ENCODE measurements at regions of chr1 and their contacts with region 1.

Region 1: DNA sequence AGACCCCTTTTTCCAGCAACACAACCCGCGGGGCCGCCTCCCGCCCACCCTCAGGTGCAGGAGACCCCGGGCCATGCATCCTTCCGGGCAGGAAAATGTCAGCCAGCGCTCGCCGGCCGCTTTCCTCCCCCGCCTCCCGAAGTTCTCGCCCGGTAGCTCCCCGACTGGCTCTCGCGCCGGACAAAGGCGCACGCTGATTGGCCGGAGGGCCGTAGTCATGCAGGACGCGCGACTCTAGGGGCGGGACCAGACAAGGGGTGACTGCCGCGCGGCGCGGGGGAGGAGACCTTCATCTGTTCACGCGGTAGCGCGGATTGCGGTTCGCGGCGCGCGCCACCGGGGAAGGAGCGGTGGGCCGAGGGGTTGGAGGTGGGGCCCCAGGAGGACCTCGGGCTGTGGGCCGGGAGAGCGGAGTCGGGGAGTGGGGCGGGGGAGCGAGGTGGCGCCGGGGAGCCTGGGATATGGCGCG is at the start of gene FLVCR1:
- DNase-seq: peak; percentile 79 to 94
- H3K4me3 ChIP-seq: peak within 1 kb of the TSS; percentile 74 to 96 (median 86)
- H3K27ac ChIP-seq: peak within 1 kb of the TSS; percentile 62
- H3K4me1 ChIP-seq: peaks cover 2 to 10% (median 6%) of the 10 kb centered on the region in 4 experiments
- H3K27me3 ChIP-seq: no peaks in the 10 kb centered on the region
- CTCF ChIP-seq: no peak
- EP300 ChIP-seq: no peak
- POLR2A ChIP-seq: peak; percentile 46 to 60; a peak in 2 of 3 replicates
- RAD21 ChIP-seq: no peak
- total RNA-seq, gene FLVCR1: 66.2 and 75.7 TPM in 2 replicates

Region 2: GRCh38 chr1:212769459-212770167 is 88.4 kb before region 1 on chr1:
- CTCF ChIA-PET with region 1: no interaction called
- POLR2A ChIA-PET with region 1: no interaction called
- DNase-seq: no peak
- H3K4me3 ChIP-seq: no peak overlapping the region
- H3K27ac ChIP-seq: no peak overlapping the region
- H3K4me1 ChIP-seq: no peaks in the 10 kb centered on the region
- H3K27me3 ChIP-seq: no peaks in the 10 kb centered on the region
- CTCF ChIP-seq: no peak
- EP300 ChIP-seq: no peak
- POLR2A ChIP-seq: no peak
- RAD21 ChIP-seq: no peak

Region 3: DNA sequence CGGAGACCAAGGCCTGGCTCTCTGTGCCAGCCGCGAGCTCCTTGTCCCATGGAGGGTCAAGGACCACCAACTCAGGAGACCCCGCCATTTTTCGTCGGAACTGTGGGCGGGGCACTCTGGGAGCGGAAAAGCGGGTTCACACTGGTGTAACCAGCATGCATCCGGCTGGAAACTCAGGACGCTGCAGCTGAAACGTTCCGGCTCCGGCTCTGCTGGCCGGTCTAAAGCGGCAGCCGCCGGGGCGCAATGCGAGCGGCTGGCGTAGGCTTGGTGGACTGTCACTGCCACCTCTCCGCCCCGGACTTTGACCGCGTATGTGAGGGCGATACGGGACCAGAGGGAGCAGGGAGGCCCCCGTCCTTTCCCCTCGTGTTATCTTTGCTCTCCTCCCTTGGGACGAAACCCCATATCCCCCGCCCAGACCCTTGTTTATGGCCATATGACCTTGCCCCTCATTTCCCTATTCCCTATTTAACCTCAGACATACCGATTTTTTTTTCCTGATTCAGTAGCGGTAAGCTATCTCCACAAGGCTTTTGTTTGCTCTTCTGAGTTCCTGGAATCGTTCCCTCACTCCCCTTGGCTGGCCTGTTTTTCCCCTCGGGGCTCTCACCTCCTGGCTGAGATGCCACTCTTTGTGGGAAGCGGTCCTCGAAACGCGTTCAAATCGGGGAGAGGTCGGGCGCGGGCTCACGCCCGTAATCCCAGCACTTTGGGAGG is 66.2 kb before region 1 on chr1 and contains the starts of genes NSL1 and TATDN3:
- CTCF ChIA-PET with region 1: no interaction called
- POLR2A ChIA-PET with region 1: interaction called, 19 read pairs
- DNase-seq: peak; percentile 75 to 100
- H3K4me3 ChIP-seq: peak within 1 kb of the TSS; percentile 77 to 99 (median 88)
- H3K27ac ChIP-seq: peak within 1 kb of the TSS; percentile 94
- H3K4me1 ChIP-seq: peaks cover 0 to 4% (median 0%) of the 10 kb centered on the region in 4 experiments; a peak in 3 of 7 replicates
- H3K27me3 ChIP-seq: no peaks in the 10 kb centered on the region
- CTCF ChIP-seq: 0 out of 4 replicates have a peak, but pooled peaks of 1 of the 3 experiments have one; percentile 2
- EP300 ChIP-seq: peak in 1 of 2 experiments; percentile 88; a peak in 1 of 3 replicates
- POLR2A ChIP-seq: peak; percentile 67 to 97
- RAD21 ChIP-seq: peak; percentile 22 to 32; a peak in 3 of 4 replicates
- total RNA-seq, gene NSL1: 48.3 and 51.7 TPM in 2 replicates
- total RNA-seq, gene TATDN3: 15.6 and 19.4 TPM in 2 replicates

Region 4: GRCh38 chr1:212847549-212847948 is 10.5 kb before region 1 on chr1 and contains the start of gene SPATA45:
- CTCF ChIA-PET with region 1: no interaction called
- POLR2A ChIA-PET with region 1: interaction called, 13 read pairs
- DNase-seq: no peak
- H3K4me3 ChIP-seq: no peak within 1 kb of the TSS
- H3K27ac ChIP-seq: no peak within 1 kb of the TSS
- H3K4me1 ChIP-seq: peaks cover 0 to 4% (median 0%) of the 10 kb centered on the region in 4 experiments; a peak in 2 of 7 replicates
- H3K27me3 ChIP-seq: no peaks in the 10 kb centered on the region
- CTCF ChIP-seq: no peak
- EP300 ChIP-seq: no peak
- POLR2A ChIP-seq: no peak
- RAD21 ChIP-seq: no peak
- total RNA-seq, gene SPATA45: 0.65 TPM in 1 of 2 replicates, not detected in the other

Region 5: DNA sequence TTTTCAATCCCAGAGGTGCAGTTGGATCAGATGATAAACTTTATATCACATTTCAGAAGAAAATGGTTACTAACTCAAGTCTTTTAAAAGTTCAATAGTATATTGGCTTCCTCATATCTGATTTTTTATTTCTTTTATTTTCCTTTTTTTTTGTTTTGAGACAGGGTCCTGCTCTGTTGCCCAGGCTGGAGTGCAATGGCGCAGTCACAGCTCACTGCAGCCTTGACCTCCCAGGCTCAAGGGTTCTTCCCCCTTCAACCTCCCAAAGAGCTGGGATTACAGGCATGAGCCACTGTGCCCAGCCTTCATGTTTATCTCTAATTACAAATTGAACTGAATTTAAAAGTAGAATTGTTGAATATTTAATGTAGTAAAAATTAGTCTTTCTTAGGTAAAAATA is 13.9 kb after region 1 on chr1:
- CTCF ChIA-PET with region 1: interaction called, 3 read pairs
- POLR2A ChIA-PET with region 1: interaction called, 25 read pairs
- DNase-seq: no peak
- H3K4me3 ChIP-seq: no peak overlapping the region
- H3K27ac ChIP-seq: no peak overlapping the region
- H3K4me1 ChIP-seq: no peaks in the 10 kb centered on the region
- H3K27me3 ChIP-seq: no peaks in the 10 kb centered on the region
- CTCF ChIP-seq: no peak
- EP300 ChIP-seq: no peak
- POLR2A ChIP-seq: no peak
- RAD21 ChIP-seq: no peak

Region 6: DNA sequence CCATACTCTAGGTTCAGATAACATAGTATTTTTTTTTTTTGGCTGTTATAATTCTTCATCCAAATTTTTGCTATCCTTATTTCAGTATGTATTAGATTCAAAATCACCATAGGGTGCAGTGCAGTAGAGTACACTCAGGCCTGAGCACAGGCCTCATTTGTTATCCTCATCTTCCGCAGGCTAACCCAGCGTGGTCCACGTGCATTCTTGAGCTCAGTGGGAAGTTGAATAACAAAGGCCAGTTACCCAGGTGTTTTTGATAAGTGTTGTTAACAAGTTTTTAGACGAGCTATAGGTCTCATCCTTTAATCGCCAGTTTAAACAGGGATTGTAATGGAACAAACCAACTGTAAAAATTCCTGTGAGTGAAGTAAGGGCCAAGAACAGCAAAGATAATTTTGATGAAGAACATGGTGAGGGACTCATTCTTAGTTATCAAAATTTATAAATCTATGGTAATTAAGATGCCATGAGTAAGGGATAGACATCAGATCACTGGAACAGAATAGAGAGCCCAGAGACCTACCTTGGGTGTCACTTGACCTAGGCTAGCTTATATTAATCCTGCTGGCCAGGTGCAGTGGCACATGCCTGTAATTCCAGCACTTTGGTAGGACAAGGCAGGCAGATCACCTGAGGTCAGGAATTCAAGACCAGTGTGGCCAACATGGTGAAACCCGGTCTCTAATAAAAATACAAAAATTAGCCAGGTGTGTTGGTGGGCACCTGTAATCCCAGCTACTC is 22.1 kb after region 1 on chr1:
- CTCF ChIA-PET with region 1: interaction called, 3 read pairs
- POLR2A ChIA-PET with region 1: interaction called, 16 read pairs
- DNase-seq: no peak
- H3K4me3 ChIP-seq: no peak overlapping the region
- H3K27ac ChIP-seq: no peak overlapping the region
- H3K4me1 ChIP-seq: peaks cover 0 to 8% (median 1%) of the 10 kb centered on the region in 4 experiments; a peak in 4 of 7 replicates
- H3K27me3 ChIP-seq: no peaks in the 10 kb centered on the region
- CTCF ChIP-seq: no peak
- EP300 ChIP-seq: no peak
- POLR2A ChIP-seq: no peak
- RAD21 ChIP-seq: no peak; a peak in 1 of 4 replicates

Region 7: GRCh38 chr1:212899845-212900244 is 41.8 kb after region 1 on chr1:
- CTCF ChIA-PET with region 1: no interaction called
- POLR2A ChIA-PET with region 1: interaction called, 67 read pairs
- DNase-seq: no peak
- H3K4me3 ChIP-seq: no peak overlapping the region
- H3K27ac ChIP-seq: peak overlapping the region; percentile 8; the same call in 1 of the 2 replicates
- H3K4me1 ChIP-seq: peaks cover 3 to 9% (median 4%) of the 10 kb centered on the region in 4 experiments; a peak in 5 of 7 replicates
- H3K27me3 ChIP-seq: no peaks in the 10 kb centered on the region
- CTCF ChIP-seq: no peak
- EP300 ChIP-seq: no peak
- POLR2A ChIP-seq: no peak; a peak in 1 of 3 replicates
- RAD21 ChIP-seq: no peak

Region 8: GRCh38 chr1:212909652-212910063 is 51.6 kb after region 1 on chr1:
- CTCF ChIA-PET with region 1: interaction called, 3 read pairs
- POLR2A ChIA-PET with region 1: interaction called, 27 read pairs
- DNase-seq: peak in 1 of 2 experiments; percentile 73
- H3K4me3 ChIP-seq: peak overlapping the region in 3 of 4 experiments; percentile 3 to 49 (median 13); a peak in 4 of 8 replicates
- H3K27ac ChIP-seq: peak overlapping the region; percentile 91
- H3K4me1 ChIP-seq: peaks cover 5 to 18% (median 14%) of the 10 kb centered on the region in 4 experiments; a peak in 6 of 7 replicates
- H3K27me3 ChIP-seq: no peaks in the 10 kb centered on the region
- CTCF ChIP-seq: no peak
- EP300 ChIP-seq: no peak
- POLR2A ChIP-seq: peak in 1 of 2 experiments; percentile 44; a peak in 1 of 3 replicates
- RAD21 ChIP-seq: no peak

Region 9: DNA sequence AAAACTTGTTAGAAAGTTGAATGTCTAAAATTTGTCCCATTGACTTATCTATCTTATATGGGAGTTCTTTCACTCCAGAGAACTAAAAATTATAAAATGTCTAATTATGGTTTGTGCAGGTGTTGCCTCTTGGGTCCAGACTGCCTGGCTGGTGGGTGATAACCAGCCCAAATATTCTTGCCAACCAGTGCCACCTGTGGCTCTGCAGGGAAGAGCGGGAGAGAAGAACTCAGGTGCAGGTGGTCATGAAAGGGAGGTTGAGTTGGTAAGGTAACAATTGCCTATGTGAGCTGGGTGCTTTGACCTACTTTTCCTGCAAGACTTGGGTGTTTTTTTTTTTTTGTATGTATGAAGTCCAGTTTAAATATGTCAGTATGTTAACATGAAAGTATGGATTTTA is 203.2 kb after region 1 on chr1:
- CTCF ChIA-PET with region 1: no interaction called
- POLR2A ChIA-PET with region 1: no interaction called
- DNase-seq: no peak
- H3K4me3 ChIP-seq: no peak overlapping the region
- H3K27ac ChIP-seq: no peak overlapping the region
- H3K4me1 ChIP-seq: peaks cover 0 to 2% (median 0%) of the 10 kb centered on the region in 4 experiments; a peak in 1 of 7 replicates
- H3K27me3 ChIP-seq: no peaks in the 10 kb centered on the region
- CTCF ChIP-seq: peak; percentile 41 to 51 (median 43)
- EP300 ChIP-seq: no peak
- POLR2A ChIP-seq: no peak
- RAD21 ChIP-seq: peak in 1 of 2 experiments; percentile 42; a peak in 2 of 4 replicates